Activated naive CD4-positive, alpha-beta T cell treated with anti-CD3 and anti-CD28 coated beads for 36 hours (primary cell): ENCODE measurements at regions of chr3 and their contacts with region 1.

Region 1: GRCh38 chr3:106423321-106424225 is 554.8 kb upstream of the CBLB start:
- DNase-seq: peak; percentile 55
- H3K4me3 Mint-ChIP-seq: no peak overlapping the region
- H3K27ac Mint-ChIP-seq: peak overlapping the region; percentile 80
- H3K4me1 Mint-ChIP-seq: peaks cover 46% of the 10 kb centered on the region
- H3K27me3 Mint-ChIP-seq: peaks cover 2% of the 10 kb centered on the region

Region 2: GRCh38 chr3:106232956-106233355 is 190.6 kb before region 1 on chr3:
- CTCF ChIA-PET with region 1: no interaction called
- intact Hi-C with region 1: loop called (anchors 5 kb)
- DNase-seq: no peak
- H3K4me3 Mint-ChIP-seq: no peak overlapping the region
- H3K27ac Mint-ChIP-seq: peak overlapping the region; percentile 86
- H3K4me1 Mint-ChIP-seq: peaks cover 56% of the 10 kb centered on the region
- H3K27me3 Mint-ChIP-seq: no peaks in the 10 kb centered on the region

Region 3: DNA sequence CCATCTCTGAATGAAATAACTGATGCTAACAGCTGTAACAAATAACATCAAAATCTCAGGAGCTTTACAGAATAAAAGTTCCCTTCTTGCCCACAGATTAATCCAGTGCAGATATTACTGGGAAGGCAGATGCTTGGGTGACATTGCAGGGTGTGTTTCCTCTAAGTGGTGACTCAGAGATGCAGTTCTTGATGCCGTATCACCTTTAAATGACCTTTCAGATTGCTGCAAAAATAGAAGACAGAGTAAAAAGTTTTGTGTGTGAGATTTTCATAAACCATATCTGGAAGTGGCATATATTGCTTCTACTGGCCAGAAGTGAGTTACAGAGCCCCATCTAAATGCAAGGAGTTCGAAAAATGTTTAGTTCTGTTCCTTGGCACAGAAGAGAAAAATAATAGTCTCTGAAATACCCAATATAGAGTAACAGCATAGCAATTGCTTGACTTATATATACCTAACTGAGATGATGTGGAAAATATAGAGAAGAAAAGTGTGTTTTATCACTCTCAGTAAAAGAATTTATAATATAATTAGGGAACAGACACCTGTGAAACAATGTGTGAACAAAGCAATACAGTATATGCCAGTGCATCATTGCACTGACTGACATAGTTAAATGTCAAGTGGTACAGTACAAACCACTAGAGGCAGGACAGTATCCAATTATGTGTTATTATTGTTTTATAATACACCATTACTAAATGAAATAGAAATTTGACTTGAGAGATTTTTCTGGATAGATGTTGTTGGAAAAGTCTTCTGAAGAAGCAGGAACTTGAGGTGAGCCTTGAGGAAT is 124.1 kb before region 1 on chr3:
- CTCF ChIA-PET with region 1: no interaction called
- intact Hi-C with region 1: loop called (anchors 1 kb)
- DNase-seq: peak; percentile 46
- H3K4me3 Mint-ChIP-seq: no peak overlapping the region
- H3K27ac Mint-ChIP-seq: peak overlapping the region; percentile 40
- H3K4me1 Mint-ChIP-seq: peaks cover 54% of the 10 kb centered on the region
- H3K27me3 Mint-ChIP-seq: no peaks in the 10 kb centered on the region

Region 4: GRCh38 chr3:106758459-106758858 is 334.9 kb after region 1 on chr3:
- CTCF ChIA-PET with region 1: no interaction called
- intact Hi-C with region 1: no loop called
- DNase-seq: no peak
- H3K4me3 Mint-ChIP-seq: no peak overlapping the region
- H3K27ac Mint-ChIP-seq: no peak overlapping the region
- H3K4me1 Mint-ChIP-seq: no peaks in the 10 kb centered on the region
- H3K27me3 Mint-ChIP-seq: no peaks in the 10 kb centered on the region

Region 5: DNA sequence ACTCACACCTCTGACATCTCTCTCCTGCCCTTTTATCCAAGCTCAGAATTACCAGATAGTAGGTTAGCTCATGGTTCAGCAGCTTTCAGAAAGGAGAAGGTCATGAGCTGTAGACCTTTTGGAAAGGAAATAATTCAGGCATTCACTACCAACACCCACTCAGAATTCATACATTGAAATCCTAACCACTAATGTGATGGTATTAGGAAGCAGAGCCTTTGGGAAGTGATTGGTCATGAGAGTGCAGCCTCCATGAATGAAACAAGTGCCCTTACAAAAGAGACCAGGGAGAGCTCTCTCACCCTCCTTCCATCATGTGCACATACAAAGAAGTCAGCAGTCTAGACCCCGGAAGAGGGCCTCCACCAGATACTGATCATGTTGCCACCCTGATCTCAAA is 637.9 kb after region 1 on chr3:
- CTCF ChIA-PET with region 1: no interaction called
- intact Hi-C with region 1: no loop called
- DNase-seq: no peak
- H3K4me3 Mint-ChIP-seq: no peak overlapping the region
- H3K27ac Mint-ChIP-seq: no peak overlapping the region
- H3K4me1 Mint-ChIP-seq: peaks cover 10% of the 10 kb centered on the region
- H3K27me3 Mint-ChIP-seq: peaks cover 13% of the 10 kb centered on the region